Lower leg skin (tissue), 4 donors: ENCODE measurements at regions of chr5 and their contacts with region 1.

Region 1: DNA sequence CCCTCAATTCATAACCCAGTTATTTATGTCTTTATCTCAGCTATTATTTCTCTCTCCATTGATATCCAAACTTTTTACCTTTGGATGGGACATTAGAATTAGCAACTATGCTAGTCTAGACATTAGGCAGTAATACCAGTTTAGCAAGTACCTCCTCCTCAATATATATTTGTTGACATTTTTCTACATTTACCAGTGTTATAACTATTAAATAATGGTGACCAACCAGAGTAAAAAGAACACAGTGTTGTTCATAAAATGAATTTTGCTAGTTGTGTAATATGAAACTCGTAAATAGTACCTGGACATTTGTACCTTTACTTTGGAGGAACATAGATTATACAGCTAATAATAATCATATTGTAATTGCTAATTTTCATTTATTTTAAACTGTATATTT is 554.6 kb upstream of the CDH6 start:
- DNase-seq: no peak
- H3K4me3 ChIP-seq: no peak overlapping the region
- CTCF ChIP-seq: no peak
- POLR2A ChIP-seq: no peak

Region 2: DNA sequence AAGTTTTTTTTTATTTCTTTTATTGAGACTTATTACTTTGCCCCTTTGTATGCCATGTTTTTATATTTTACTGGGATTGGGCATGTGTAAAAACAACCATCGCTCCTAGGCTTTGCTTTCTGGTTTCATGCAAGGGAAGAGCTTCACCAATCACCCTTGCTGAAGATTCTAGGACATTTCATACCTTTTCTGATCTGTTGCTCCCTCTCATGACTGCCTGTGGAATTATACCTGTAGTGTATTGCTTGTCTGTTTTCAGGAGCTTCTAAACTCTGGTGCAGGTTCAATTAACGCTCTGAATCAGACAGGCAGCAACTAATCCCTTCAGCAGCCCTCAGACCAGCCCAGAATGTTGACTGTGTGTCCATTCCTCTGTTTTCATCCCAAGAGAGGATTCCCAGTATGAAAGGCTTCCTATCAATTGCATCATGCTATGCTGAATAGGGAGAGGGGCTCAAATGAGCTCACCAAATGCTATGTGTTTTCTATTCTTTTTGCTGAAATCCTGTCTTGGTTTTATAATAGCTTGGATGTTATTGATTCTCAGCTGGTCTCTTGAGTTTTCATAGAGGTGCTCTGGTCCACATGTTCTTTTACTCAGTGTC is 18.3 kb before region 1 on chr5:
- intact Hi-C with region 1: loop called (anchors 2 kb)
- DNase-seq: no peak
- H3K4me3 ChIP-seq: no peak overlapping the region
- CTCF ChIP-seq: no peak
- POLR2A ChIP-seq: no peak